Adrenal gland (tissue), 19 donors: ENCODE measurements at regions of chr7 and their contacts with region 1.

Region 1: DNA sequence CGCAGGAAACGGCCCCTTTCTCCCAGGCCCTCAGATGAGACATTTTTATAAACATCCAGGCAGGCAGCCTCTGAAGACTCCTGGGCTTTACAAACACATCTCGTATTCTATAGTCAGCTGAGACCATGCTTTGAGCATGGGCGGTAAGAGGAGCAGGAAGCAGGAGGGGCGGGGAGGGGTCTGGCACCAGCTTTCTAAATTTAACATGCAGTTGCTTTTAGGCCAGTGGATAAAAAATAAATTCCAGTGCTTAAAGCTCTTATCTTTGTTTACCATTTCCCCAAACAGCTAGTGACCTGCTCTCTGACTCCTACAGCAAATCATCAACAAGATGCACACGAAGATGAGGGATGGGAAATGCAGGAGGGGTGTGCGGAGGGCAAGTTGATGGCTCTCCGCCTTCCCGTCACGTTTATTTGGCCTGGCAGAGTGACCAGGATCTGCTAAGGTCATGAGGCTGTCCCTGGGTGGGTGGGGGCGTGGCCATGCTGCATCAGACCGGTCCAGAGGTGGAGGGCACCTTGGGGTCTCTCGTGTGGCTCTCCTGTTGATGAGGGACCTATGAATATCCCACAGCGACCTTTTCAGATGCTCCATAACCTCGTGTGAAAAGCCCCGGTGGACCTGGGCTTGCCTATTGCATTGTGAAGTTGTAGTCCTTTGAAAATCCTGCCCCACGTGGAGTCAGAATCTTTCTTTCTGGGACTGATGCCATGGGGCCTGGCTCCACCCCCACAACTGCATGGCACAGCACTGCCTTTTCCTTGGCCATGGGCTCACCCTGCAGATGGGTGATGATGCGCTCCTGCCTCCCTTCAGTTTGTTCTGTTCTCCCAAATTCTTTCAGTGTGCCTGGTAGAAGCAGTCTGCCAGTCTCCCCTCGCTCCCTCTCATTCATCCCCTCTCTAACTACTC is 67.5 kb downstream of the PARP12 start:
- DNase-seq: peak; percentile 58 to 81 (median 79)
- H3K4me3 ChIP-seq: no peak overlapping the region
- H3K27ac ChIP-seq: no peak overlapping the region
- H3K4me1 ChIP-seq: no peaks in the 10 kb centered on the region
- H3K27me3 ChIP-seq: no peaks in the 10 kb centered on the region
- CTCF ChIP-seq: no peak
- POLR2A ChIP-seq: no peak

Region 2: DNA sequence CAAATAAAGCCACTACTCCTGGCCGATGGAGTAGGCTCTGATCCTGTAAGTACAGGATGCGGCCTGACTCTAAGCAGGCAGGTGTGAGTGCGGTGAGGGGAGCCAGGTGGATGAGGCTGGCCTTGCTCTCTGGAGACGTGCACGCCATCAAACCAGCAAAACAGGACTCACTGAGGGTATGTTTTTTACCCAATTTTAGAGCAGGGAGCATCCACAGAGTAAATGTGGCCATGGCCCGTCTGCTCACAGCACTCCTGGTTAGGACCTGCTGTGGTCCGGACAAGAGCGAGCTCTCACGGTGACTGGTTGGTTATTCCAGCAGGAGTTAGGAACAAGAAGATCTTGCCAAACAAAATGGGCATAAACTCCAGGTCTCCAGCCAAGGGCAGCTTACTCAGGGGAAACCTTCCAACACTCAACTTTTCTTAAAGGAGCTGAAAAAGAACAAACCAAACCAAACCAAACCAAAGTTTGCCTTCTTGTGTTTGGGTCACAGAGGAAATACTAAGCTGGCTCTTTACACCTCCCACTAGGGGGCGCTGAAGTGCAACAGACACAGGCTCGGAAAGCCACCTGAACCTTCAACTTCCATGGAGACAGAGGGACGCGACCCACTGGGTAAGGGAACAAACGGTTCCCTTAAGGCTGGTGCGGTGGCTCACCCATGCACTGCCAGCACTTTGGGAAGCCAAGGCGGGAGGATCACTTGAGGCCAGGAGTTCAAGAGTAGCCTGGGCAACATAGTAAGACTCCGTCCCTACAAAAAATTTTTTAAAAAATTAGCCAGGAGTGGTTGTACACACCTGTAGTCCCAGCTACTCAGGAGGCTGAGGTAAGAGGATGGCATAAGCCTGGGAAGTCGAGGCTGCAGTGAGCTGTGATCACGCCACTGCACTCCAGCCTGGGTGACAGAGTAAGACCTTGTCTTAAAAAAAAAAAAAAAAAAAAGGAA is 349.4 kb before region 1 on chr7:
- intact Hi-C with region 1: loop called (anchors 5 kb)
- DNase-seq: peak; percentile 81 to 94 (median 87)
- H3K4me3 ChIP-seq: no peak overlapping the region
- H3K27ac ChIP-seq: peak overlapping the region in 1 of 5 donors; percentile 0
- H3K4me1 ChIP-seq: peaks cover 0 to 20% of the 10 kb centered on the region in 2 donors
- H3K27me3 ChIP-seq: no peaks in the 10 kb centered on the region
- CTCF ChIP-seq: peak; percentile 86 to 95 (median 91)
- POLR2A ChIP-seq: no peak

Region 3: GRCh38 chr7:139855498-139856270 is 139.6 kb before region 1 on chr7:
- intact Hi-C with region 1: no loop called
- DNase-seq: peak in 5 of 7 donors; percentile 27 to 44 (median 33)
- H3K4me3 ChIP-seq: no peak overlapping the region
- H3K27ac ChIP-seq: peak overlapping the region in 2 of 5 donors; percentile 31 to 82
- H3K4me1 ChIP-seq: peaks cover 3 to 6% of the 10 kb centered on the region in 2 donors
- H3K27me3 ChIP-seq: no peaks in the 10 kb centered on the region
- CTCF ChIP-seq: no peak
- POLR2A ChIP-seq: no peak

Region 4: GRCh38 chr7:139889186-139889871 is 105.9 kb before region 1 on chr7:
- intact Hi-C with region 1: no loop called
- DNase-seq: no peak
- H3K4me3 ChIP-seq: no peak overlapping the region
- H3K27ac ChIP-seq: no peak overlapping the region
- H3K4me1 ChIP-seq: no peaks in the 10 kb centered on the region
- H3K27me3 ChIP-seq: no peaks in the 10 kb centered on the region
- CTCF ChIP-seq: no peak
- POLR2A ChIP-seq: no peak

Region 5: DNA sequence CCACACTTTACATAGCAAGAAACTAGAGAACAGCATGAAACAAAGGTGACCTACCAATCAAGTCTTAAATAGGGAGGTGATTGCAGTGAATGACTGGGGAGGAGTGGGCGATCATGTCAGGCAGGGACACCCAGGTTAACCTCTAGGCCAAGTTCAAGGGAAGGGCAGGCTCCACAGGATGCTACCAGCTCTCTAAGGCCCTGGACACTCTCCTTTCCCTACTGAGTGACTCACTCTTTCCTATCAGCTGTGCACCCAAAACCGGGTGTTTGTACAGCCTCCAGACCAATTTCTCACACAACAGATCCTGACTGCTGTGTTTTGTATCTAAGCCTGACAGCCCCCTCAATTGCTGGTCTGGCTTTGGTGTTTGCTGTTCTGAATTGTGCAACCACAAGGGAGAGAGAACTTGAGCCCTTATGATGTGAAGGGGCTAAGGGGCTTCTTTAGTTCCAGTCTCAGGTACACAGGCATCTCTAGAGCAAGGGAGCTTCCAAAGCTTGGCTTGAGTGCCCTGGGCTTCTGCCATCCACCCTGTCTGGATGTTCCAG is 58.4 kb before region 1 on chr7:
- intact Hi-C with region 1: no loop called
- DNase-seq: peak in 5 of 7 donors; percentile 24 to 69 (median 41)
- H3K4me3 ChIP-seq: no peak overlapping the region
- H3K27ac ChIP-seq: peak overlapping the region in 1 of 5 donors; percentile 22
- H3K4me1 ChIP-seq: no peaks in the 10 kb centered on the region
- H3K27me3 ChIP-seq: no peaks in the 10 kb centered on the region
- CTCF ChIP-seq: no peak
- POLR2A ChIP-seq: no peak